Upper lobe of right lung (tissue), 1 donor: ENCODE measurements at regions of chr5 and their contacts with region 1.

Region 1: GRCh38 chr5:59193616-59194319 is 610.9 kb downstream of the RAB3C start:
- DNase-seq: no peak
- ATAC-seq: peak; percentile 79
- H3K4me3 ChIP-seq: no peak overlapping the region
- H3K27ac ChIP-seq: no peak overlapping the region
- H3K4me1 ChIP-seq: peaks cover 8% of the 10 kb centered on the region
- H3K27me3 ChIP-seq: no peaks in the 10 kb centered on the region
- CTCF ChIP-seq: no peak

Region 2: DNA sequence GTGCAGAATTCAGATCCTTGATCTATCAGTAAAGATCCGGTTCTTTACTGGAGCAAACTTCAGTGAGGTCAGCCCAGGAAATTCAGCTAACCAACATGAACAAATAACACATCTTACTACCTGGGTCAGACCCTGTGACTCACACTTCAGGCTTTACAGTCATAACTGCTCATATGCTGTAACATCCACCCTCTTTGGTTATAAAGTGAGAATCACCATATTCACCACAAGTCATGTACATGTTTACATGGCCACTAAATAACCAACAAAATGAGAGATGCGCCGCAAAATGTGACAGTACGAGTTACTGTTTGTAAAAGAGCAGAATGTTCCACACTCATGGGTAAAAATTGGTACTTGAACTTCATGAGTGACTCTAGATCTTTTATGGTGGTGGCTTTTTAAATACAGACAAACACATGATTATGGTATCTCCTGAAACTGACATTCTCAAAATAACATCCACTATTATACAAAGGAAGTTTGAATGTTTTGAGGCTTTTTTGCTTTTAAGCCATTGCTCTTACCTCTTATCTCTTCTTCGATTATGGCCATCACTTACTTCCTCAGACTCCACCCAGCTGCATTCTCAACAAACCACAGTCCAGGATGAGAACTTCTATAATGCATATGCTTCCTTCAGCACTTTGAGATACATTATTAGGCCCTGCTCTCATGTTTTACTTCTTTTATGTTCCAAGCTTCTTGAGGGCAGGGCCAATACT is 94.3 kb before region 1 on chr5:
- intact Hi-C with region 1: no loop called
- DNase-seq: no peak
- ATAC-seq: peak; percentile 68
- H3K4me3 ChIP-seq: no peak overlapping the region
- H3K27ac ChIP-seq: no peak overlapping the region
- H3K4me1 ChIP-seq: no peaks in the 10 kb centered on the region
- H3K27me3 ChIP-seq: no peaks in the 10 kb centered on the region
- CTCF ChIP-seq: no peak

Region 3: DNA sequence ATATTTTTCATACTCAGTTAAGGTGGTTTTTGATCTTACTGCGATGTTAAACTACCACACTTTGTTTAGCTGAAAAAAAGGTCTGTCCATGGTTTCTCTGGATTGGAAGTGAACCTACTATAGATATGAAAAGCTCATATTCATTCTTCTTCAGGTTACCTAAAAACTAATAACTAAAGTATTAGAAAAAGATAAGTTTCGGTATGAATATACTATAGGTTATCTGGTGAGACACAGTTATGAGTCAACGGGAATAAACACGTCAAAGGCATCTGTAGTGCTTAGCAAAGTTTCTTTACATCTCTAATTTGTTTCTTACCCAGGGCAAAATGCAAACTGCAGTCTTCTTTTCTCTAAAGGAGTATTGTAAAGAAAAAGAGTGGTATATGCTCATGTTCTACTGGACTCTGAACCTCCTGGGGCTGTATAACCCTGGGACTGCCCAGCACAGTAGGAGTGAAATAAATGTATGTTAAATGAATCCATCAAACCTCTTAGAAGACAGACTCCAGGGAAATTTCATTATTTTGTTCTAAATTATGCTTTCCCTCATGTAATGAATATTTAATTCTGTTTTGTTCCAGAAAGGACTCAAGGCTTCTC is 177.9 kb after region 1 on chr5:
- intact Hi-C with region 1: loop called (anchors 10 kb)
- DNase-seq: no peak
- ATAC-seq: no peak
- H3K4me3 ChIP-seq: no peak overlapping the region
- H3K27ac ChIP-seq: no peak overlapping the region
- H3K4me1 ChIP-seq: no peaks in the 10 kb centered on the region
- H3K27me3 ChIP-seq: no peaks in the 10 kb centered on the region
- CTCF ChIP-seq: no peak

Region 4: DNA sequence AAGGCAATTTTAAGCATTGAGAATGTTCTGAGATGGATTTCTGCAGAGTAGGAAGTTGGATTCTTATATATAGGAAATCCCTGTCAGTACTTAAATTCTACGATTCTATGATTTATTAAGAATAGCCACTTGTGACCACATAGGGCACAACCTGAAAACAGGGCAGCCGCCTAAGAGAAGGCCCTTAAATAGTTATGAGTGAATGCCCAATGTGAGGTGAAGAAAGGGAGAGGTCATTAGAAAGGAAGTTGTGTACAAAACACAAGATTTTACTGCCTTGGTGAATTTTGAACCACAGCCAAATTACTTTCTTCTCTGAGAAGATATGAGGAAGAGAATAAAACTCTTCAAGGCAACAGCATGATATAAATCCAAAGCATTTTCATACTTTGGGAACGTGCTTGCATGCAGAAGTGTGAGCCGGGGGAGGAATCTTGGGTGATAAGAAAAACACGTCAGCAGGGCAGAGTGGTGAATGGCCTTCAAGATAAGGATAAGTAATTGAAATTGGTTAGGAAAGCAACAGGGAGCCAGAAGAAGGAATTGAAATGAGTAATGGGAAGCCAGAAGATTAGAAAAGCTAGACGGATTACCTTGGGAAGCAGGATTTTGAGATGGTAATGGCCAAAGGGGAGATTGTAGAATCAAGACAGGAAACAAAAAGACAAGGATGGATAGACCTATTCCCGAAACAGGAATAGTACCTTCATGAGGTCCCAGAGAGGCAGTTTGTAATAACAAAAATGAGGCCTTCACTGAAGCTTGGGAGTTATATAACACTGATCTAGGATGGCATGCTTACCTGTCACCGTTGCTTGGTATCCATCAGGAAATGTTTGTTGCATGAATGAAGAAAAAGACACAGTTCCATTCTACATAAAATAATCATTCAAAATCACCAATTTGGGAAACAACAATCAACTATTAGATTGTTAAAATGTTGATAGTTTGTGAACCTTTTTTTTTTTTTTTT is 455.5 kb after region 1 on chr5:
- intact Hi-C with region 1: no loop called
- DNase-seq: no peak
- ATAC-seq: no peak
- H3K4me3 ChIP-seq: no peak overlapping the region
- H3K27ac ChIP-seq: no peak overlapping the region
- H3K4me1 ChIP-seq: peaks cover 16% of the 10 kb centered on the region
- H3K27me3 ChIP-seq: no peaks in the 10 kb centered on the region
- CTCF ChIP-seq: no peak